Ovary (tissue), 10 donors: ENCODE measurements at regions of chr18 and their contacts with region 1.

Region 1: GRCh38 chr18:3498698-3499471 is 48.9 kb downstream of the TGIF1 start:
- DNase-seq: peak; percentile 27 to 63 (median 41)
- H3K4me3 ChIP-seq: peak overlapping the region; percentile 38
- H3K27ac ChIP-seq: no peak overlapping the region
- H3K4me1 ChIP-seq: peaks cover 2% of the 10 kb centered on the region
- H3K27me3 ChIP-seq: no peaks in the 10 kb centered on the region
- CTCF ChIP-seq: no peak
- EP300 ChIP-seq: no peak
- POLR2A ChIP-seq: no peak

Region 2: GRCh38 chr18:3219631-3220335 is 279.1 kb before region 1 on chr18 and contains the start of gene MYOM1:
- intact Hi-C with region 1: no loop called
- DNase-seq: no peak
- H3K4me3 ChIP-seq: peak within 1 kb of the TSS; percentile 12
- H3K27ac ChIP-seq: no peak within 1 kb of the TSS
- H3K4me1 ChIP-seq: no peaks in the 10 kb centered on the region
- H3K27me3 ChIP-seq: no peaks in the 10 kb centered on the region
- CTCF ChIP-seq: no peak
- EP300 ChIP-seq: no peak
- POLR2A ChIP-seq: no peak
- total RNA-seq, gene MYOM1: 0.69 to 7.3 (median 3.6) TPM

Region 3: GRCh38 chr18:3368193-3368592 is 130.7 kb before region 1 on chr18:
- intact Hi-C with region 1: no loop called
- DNase-seq: no peak
- H3K4me3 ChIP-seq: no peak overlapping the region
- H3K27ac ChIP-seq: no peak overlapping the region
- H3K4me1 ChIP-seq: no peaks in the 10 kb centered on the region
- H3K27me3 ChIP-seq: no peaks in the 10 kb centered on the region
- CTCF ChIP-seq: no peak
- EP300 ChIP-seq: no peak
- POLR2A ChIP-seq: no peak

Region 4: DNA sequence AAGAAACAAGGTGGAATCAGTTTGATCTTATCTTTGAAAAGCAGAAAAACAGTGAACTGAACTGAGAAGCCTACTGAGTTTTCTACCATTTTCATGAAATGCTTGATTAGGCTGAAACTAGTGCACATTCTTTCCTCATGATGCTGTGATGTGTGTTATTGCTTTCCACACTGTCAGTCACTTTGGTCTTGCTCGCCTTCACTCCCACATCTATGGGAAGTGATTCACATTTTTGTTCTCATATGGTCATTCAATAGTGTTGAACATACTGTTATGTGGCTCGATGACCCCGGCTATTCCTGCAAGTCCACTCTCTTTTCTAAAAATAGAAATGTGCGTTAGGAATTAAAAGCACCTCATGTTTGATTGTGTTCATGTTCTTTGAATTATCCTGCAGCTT is 80.8 kb after region 1 on chr18:
- intact Hi-C with region 1: loop called in 1 of 4 experiments (anchors 10 kb)
- DNase-seq: no peak
- H3K4me3 ChIP-seq: no peak overlapping the region
- H3K27ac ChIP-seq: no peak overlapping the region
- H3K4me1 ChIP-seq: no peaks in the 10 kb centered on the region
- H3K27me3 ChIP-seq: no peaks in the 10 kb centered on the region
- CTCF ChIP-seq: no peak
- EP300 ChIP-seq: no peak
- POLR2A ChIP-seq: no peak